Ovary (tissue), 10 donors: ENCODE measurements at regions of chr2 and their contacts with region 1.

Region 1: DNA sequence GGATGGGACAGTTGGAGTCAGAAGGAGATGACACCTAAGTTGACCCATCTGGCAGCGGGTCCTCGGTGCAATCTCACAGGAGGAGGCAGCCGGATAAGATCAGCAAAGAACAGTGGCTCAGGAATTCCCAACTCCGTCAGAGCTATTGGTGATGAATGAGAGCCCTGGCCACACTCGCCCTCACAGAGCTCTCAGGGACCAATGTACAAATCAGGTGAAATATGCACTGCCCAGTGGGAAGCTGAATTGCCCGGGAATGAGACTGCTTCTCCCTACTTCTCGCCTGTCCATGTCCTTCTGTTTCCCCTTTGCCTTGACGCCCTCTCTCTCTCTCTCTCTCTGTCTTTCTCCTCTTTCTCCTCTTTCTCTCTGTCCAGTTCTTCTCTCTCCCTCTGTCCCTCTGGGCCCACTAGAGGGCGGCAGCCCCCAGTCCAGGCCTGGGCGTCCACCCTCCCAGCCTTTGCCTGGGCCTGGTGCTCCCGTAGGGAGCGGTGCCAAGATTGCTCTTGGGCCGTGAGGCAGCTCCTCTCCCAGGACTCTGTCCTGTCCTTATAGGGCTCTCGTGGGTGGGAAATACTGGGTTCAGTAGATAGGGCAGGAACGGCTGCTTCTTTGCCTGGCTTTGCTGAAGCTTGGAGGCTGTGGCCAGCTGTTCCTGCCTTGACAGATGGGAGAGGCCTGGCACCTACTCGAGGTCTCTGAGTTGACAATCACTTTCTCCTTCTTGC is 28.3 kb upstream of the PUM2 start:
- DNase-seq: peak; percentile 92 to 95 (median 94)
- H3K4me3 ChIP-seq: no peak overlapping the region
- H3K27ac ChIP-seq: peak overlapping the region in 1 of 2 donors; percentile 55
- H3K4me1 ChIP-seq: peaks cover 4% of the 10 kb centered on the region
- H3K27me3 ChIP-seq: no peaks in the 10 kb centered on the region
- CTCF ChIP-seq: peak; percentile 72 to 89 (median 79)
- EP300 ChIP-seq: no peak
- POLR2A ChIP-seq: no peak

Region 2: GRCh38 chr2:20642055-20642971 is 263.4 kb after region 1 on chr2:
- intact Hi-C with region 1: loop called in 1 of 4 experiments (anchors 5 kb)
- DNase-seq: peak; percentile 68 to 89 (median 84)
- H3K4me3 ChIP-seq: no peak overlapping the region
- H3K27ac ChIP-seq: no peak overlapping the region
- H3K4me1 ChIP-seq: peaks cover 3% of the 10 kb centered on the region
- H3K27me3 ChIP-seq: no peaks in the 10 kb centered on the region
- CTCF ChIP-seq: peak; percentile 93 to 96 (median 96)
- EP300 ChIP-seq: no peak
- POLR2A ChIP-seq: no peak